ENCODE measurements at regions of chr2 and their contacts with region 1.

Region 1: DNA sequence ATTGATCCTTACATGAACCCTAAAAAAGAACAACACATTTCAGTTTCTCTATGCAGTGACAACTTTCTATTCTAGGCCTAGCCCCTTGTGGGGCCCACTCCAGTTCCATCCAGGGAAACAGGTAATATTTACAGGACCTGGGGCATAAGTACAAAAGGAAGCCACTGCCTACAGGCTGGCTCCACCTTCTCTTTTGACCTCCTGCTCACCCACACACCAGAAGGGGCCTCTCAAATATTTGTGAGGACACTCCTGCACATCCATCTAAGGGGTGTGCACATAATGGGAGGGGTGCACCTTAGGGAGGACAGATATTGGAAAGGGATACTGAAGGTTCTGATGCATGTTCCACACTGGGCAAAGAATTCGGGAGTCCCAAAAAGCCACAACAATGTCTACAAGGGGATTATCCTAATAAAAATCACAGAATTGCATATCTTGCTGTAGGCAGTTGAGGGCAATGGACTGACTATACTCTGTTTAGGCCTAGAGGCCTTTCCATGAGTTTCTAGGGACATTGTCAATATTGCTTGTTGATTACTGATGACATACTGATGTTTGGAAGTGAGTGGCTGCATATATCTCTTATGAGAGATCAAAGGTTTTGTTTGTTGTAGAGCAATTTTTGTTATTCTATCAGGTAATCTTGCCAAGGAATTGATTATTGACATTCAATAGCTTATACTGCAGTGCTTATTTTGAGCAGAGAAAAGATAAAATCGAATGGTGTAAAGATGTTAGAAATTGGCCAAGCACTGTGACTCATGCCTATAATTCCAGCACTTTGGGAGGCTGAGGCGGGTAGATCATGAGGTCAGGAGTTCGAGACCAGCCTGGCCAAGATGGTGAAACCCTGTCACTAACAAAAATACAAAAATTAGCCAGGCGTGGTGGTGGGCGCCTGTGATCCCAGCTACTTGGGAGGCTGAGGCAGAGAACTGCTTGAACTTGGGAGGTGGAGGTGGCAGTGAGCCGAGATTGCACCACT is 23.8 kb upstream of the HNRNPA3 start:
- DNase-seq: no peak
- ATAC-seq: peak; percentile 27; the same call in 1 of the 3 replicates
- H3K4me3 ChIP-seq: no peak overlapping the region
- H3K27ac ChIP-seq: no peak overlapping the region
- H3K4me1 ChIP-seq: peaks cover 7% of the 10 kb centered on the region; the same call in 1 of the 2 replicates
- H3K27me3 ChIP-seq: no peaks in the 10 kb centered on the region
- CTCF ChIP-seq: no peak
- EP300 ChIP-seq: no peak
- POLR2A ChIP-seq: no peak
- RAD21 ChIP-seq: no peak

Region 2: GRCh38 chr2:177072090-177072489 is 116.7 kb before region 1 on chr2:
- CTCF ChIA-PET with region 1: no interaction called
- POLR2A ChIA-PET with region 1: no interaction called
- RAD21 ChIA-PET with region 1: no interaction called
- SMC1A ChIA-PET with region 1: no interaction called
- in situ Hi-C with region 1: no loop called
- intact Hi-C with region 1: no loop called
- DNase-seq: no peak
- ATAC-seq: no peak
- H3K4me3 ChIP-seq: no peak overlapping the region
- H3K27ac ChIP-seq: no peak overlapping the region
- H3K4me1 ChIP-seq: no peaks in the 10 kb centered on the region
- H3K27me3 ChIP-seq: no peaks in the 10 kb centered on the region
- CTCF ChIP-seq: no peak
- EP300 ChIP-seq: no peak
- POLR2A ChIP-seq: no peak
- RAD21 ChIP-seq: no peak

Region 3: GRCh38 chr2:177169810-177170514 is 18.8 kb before region 1 on chr2:
- CTCF ChIA-PET with region 1: interaction called, 128 read pairs
- POLR2A ChIA-PET with region 1: interaction called, 6 read pairs
- RAD21 ChIA-PET with region 1: interaction called, 65 read pairs
- SMC1A ChIA-PET with region 1: interaction called, 82 read pairs
- in situ Hi-C with region 1: no loop called
- intact Hi-C with region 1: no loop called
- DNase-seq: peak; percentile 82
- ATAC-seq: peak; percentile 81
- H3K4me3 ChIP-seq: peak overlapping the region; percentile 9; the same call in 1 of the 2 replicates
- H3K27ac ChIP-seq: peak overlapping the region; percentile 84
- H3K4me1 ChIP-seq: peaks cover 33% of the 10 kb centered on the region
- H3K27me3 ChIP-seq: no peaks in the 10 kb centered on the region
- CTCF ChIP-seq: no peak
- EP300 ChIP-seq: no peak; a peak in 2 of 4 replicates
- POLR2A ChIP-seq: no peak
- RAD21 ChIP-seq: no peak